Right lobe of liver (tissue), 6 donors: ENCODE measurements at regions of chr19 and their contacts with region 1.

Region 1: GRCh38 chr19:18322759-18323460 is at the start of gene LSM4:
- DNase-seq: peak; percentile 98 to 99 (median 98)
- ATAC-seq: peak; percentile 87 to 94 (median 90)
- H3K4me3 ChIP-seq: peak within 1 kb of the TSS; percentile 64 to 97 (median 95)
- H3K27ac ChIP-seq: peak within 1 kb of the TSS; percentile 79 to 89 (median 82)
- H3K4me1 ChIP-seq: peaks cover under 1 to 52% (median 23%) of the 10 kb centered on the region in 4 donors
- H3K27me3 ChIP-seq: no peaks in the 10 kb centered on the region
- CTCF ChIP-seq: no peak
- POLR2A ChIP-seq: peak; percentile 94
- total RNA-seq, gene LSM4: 37.6 to 139 (median 47.3) TPM

Region 2: GRCh38 chr19:18279516-18280273 is 43.2 kb before region 1 on chr19:
- intact Hi-C with region 1: loop called in 1 of 2 experiments (anchors 5 kb)
- DNase-seq: peak; percentile 92 to 95 (median 94)
- ATAC-seq: peak; percentile 66 to 79 (median 68)
- H3K4me3 ChIP-seq: peak overlapping the region; percentile 82 to 93 (median 93)
- H3K27ac ChIP-seq: peak overlapping the region; percentile 100
- H3K4me1 ChIP-seq: peaks cover 0 to 51% (median 26%) of the 10 kb centered on the region in 4 donors
- H3K27me3 ChIP-seq: no peaks in the 10 kb centered on the region
- CTCF ChIP-seq: peak; percentile 82 to 90 (median 85)
- POLR2A ChIP-seq: peak; percentile 86

Region 3: DNA sequence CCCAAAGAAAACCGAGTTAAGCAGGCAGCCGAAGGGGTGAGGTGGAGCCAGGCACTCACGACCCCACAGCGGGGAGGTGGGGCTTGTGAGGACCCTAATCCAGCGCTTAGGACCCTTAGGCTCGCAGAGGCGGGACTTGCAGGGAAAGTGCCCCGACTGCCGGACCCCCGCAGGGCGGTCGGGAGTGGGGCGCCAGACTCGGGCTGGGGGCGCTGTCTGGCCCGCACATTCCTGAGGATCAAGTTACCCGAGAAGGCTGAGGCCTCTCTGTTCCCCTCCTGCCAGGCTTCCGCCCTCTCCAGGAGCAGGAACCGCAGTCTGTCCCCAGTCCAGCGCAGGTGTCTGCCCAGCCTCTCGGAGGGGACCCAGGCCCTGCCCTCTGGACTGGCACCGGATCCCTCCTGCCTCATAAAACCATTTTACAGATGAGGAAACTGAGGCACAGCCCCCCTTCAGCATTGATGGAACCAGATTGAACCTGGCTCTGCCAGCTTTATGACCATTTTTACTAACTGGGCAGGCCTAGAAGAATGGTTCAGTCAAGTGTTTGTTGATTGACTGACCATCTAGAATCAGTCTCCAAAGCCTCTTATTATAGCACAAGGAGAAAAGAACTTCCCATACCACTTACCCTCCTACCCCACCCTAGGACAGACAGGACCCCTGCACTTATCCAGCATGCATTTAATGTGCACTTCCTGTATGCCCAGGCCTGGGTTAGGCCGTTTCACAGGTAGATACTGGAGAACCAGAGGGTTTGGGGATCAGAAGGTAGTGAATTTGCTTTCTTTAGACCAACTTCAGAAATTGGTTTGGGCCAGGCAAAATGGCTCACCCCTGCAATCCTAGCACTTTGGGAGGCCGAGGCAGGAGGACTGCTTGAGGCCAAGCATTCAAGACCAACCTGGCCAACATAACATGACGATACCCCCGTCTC is 34.8 kb before region 1 on chr19:
- intact Hi-C with region 1: loop called in 1 of 2 experiments (anchors 5 kb)
- DNase-seq: no peak
- ATAC-seq: no peak
- H3K4me3 ChIP-seq: no peak overlapping the region
- H3K27ac ChIP-seq: no peak overlapping the region
- H3K4me1 ChIP-seq: peaks cover 0 to 11% (median 0%) of the 10 kb centered on the region in 4 donors
- H3K27me3 ChIP-seq: no peaks in the 10 kb centered on the region
- CTCF ChIP-seq: no peak
- POLR2A ChIP-seq: no peak